ENCODE measurements at regions of chr9 and their contacts with region 1.

Region 1: GRCh38 chr9:35616681-35617459 is 1.3 kb downstream of the CD72 start:
- DNase-seq: peak; percentile 46 to 71 (median 64)
- ATAC-seq: peak; percentile 80
- H3K4me3 ChIP-seq: peak overlapping the region; percentile 84
- H3K4me3 Mint-ChIP-seq: peak overlapping the region; percentile 82 to 89 (median 86)
- H3K27ac ChIP-seq: peak overlapping the region; percentile 71
- H3K27ac Mint-ChIP-seq: peak overlapping the region; percentile 84 to 93 (median 91)
- H3K4me1 ChIP-seq: peaks cover 27 to 36% of the 10 kb centered on the region in 2 donors
- H3K4me1 Mint-ChIP-seq: peaks cover 33 to 44% (median 38%) of the 10 kb centered on the region in 7 donors
- H3K27me3 ChIP-seq: no peaks in the 10 kb centered on the region
- H3K27me3 Mint-ChIP-seq: no peaks in the 10 kb centered on the region

Region 2: DNA sequence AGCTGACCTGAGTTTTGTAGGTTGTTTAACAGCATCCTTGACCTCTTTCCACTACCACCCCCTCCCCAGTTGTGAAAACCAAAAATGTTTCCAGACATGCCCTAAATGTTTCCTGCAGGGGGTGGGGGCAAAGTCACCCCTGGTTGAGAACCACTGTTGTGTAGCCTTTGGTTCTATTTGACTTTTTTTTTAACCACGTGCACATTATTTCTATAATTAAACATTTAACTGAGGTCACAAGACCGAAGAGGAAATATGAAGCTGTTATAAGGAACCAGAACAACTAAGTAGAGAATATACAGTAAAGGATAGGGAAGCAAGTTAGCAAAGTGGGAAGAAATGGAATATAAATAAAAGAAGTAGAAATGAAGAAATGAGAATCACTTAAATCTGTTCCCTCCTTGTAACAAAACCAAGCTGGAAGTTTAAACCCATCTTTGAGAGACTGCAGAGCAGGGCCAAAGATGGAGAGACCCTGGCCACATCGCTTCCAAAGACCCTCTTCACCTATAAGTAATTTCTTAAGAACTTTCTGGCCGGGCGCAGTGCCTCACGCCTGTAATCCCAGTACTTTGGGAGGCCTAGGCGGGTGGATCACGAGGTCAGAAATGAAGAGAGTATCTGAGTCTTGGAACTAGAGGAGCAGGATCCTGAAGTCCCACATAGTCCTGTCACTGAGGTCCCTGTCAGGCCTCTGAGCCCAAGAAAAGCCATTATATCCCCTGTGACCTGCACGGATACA is 19.4 kb after region 1 on chr9:
- CTCF ChIA-PET with region 1: interaction called, 17 read pairs
- POLR2A ChIA-PET with region 1: interaction called, 11 read pairs
- intact Hi-C with region 1: no loop called
- DNase-seq: no peak
- ATAC-seq: peak; percentile 49
- H3K4me3 ChIP-seq: no peak overlapping the region
- H3K4me3 Mint-ChIP-seq: peak overlapping the region in 2 of 10 donors; percentile 20 to 37
- H3K27ac ChIP-seq: no peak overlapping the region
- H3K27ac Mint-ChIP-seq: peak overlapping the region in 6 of 9 donors; percentile 21 to 90 (median 62)
- H3K4me1 ChIP-seq: peaks cover 19 to 35% of the 10 kb centered on the region in 2 donors
- H3K4me1 Mint-ChIP-seq: peaks cover 38 to 64% (median 53%) of the 10 kb centered on the region in 7 donors
- H3K27me3 ChIP-seq: no peaks in the 10 kb centered on the region
- H3K27me3 Mint-ChIP-seq: no peaks in the 10 kb centered on the region

Region 3: DNA sequence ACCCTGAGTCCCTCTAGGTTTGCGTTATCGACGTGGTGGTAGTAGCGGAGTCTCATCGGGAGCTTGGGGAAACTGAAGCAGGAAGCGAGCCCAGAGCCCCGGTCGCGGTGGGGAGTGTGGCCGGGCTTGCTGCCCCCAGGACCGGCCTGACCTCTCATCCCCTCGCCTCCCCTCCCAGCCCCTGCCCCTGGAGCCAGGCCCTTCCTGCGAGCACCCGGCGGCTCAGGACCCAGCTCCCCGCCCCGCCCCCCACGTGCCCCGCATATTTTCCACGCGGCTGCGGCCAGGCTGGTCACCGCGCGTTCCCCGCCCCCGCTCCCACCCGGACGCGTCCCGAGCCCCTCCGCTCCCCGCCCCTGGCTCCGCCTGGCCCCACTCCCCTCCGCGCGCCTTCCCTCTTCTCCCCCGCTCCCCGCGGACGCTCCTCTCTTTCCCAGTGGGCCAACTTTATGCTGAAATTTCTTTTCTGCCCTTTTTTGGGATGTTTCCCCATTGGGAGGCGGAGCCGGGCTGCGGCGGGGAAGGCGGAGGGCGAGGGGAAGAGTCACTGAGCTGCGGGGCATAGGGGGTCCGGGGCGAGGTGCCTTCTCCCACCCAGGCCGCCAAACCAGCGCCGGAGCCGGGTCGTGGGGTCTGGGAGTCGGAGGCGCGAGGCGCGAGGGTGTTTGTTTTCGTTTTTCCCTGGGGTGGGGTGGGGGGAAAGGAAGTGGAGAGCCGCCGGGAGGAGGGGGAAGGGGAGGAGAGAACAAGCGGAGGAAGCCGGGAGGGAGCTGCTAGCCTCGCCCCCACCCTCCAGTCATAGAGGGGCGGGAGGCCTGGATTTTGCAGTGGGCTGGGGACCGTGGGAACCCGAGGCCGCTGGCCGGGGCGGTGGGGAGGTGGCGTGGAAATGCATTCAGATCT is 73.8 kb after region 1 on chr9:
- CTCF ChIA-PET with region 1: interaction called, 25 read pairs
- POLR2A ChIA-PET with region 1: interaction called, 22 read pairs
- intact Hi-C with region 1: loop called in 1 of 2 experiments (anchors 2 kb)
- DNase-seq: peak in 7 of 9 donors; percentile 21 to 52 (median 31)
- ATAC-seq: peak; percentile 50
- H3K4me3 ChIP-seq: peak overlapping the region; percentile 65
- H3K4me3 Mint-ChIP-seq: peak overlapping the region; percentile 80 to 94 (median 88)
- H3K27ac ChIP-seq: peak overlapping the region; percentile 70
- H3K27ac Mint-ChIP-seq: peak overlapping the region; percentile 12 to 95 (median 74)
- H3K4me1 ChIP-seq: peaks cover 0 to 5% of the 10 kb centered on the region in 2 donors
- H3K4me1 Mint-ChIP-seq: peaks cover 16 to 31% (median 25%) of the 10 kb centered on the region in 7 donors
- H3K27me3 ChIP-seq: no peaks in the 10 kb centered on the region
- H3K27me3 Mint-ChIP-seq: no peaks in the 10 kb centered on the region

Measured in naive thymus-derived CD4-positive, alpha-beta T cell (primary cell).